ENCODE measurements at regions of chr11 and their contacts with region 1.

Region 1: GRCh38 chr11:34916015-34916842 is at the starts of genes APIP and PDHX:
- DNase-seq: peak; percentile 93
- ATAC-seq: peak; percentile 96
- H3K4me3 Mint-ChIP-seq: peak within 1 kb of the TSS; percentile 95
- H3K27ac Mint-ChIP-seq: peak within 1 kb of the TSS; percentile 91
- H3K4me1 Mint-ChIP-seq: peaks cover 27% of the 10 kb centered on the region
- H3K27me3 Mint-ChIP-seq: no peaks in the 10 kb centered on the region
- CTCF ChIP-seq: no peak
- total RNA-seq, gene APIP: 17.8 and 18.7 TPM in 2 replicates
- total RNA-seq, gene PDHX: 18.1 and 18.6 TPM in 2 replicates

Region 2: DNA sequence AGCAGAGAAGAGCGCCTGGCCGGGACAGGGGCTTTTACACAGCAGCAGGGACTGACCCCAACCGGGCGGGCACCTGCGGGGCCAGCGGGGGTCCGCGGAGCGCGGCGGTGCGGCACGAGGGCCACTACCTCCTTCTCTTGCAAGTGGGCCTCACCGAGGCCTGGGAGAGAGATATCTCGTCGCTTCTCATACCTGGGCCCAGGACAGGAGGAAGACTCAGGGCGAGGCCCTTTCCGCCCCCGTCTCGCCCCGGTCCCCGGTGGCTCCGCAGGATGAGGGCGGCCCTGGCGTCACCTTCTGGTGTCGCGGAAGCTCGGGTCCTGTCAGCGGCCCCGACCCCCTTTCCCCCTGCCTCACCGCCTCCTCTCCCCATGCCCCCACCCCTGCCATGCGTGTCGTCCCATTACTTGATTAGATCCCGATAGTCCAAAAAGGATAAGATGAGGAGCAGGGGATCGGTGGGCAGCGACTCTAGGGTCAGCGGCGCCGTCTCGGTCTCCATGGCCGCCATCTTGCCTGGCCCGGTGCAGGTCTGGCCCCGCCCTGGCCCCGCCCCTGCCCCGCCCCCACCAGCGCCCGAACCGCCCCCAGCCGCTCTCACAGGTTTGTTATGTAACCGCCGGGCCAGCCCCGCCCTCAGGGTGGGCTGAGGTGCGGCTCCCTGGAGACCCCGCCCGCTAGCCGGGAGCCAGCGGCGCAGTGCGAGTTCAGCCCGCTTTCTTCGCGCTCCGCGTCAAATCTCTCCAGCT is 1142.1 kb before region 1 on chr11 and contains the start of gene FBXO3:
- CTCF ChIA-PET with region 1: no interaction called
- POLR2A ChIA-PET with region 1: no interaction called
- intact Hi-C with region 1: loop called (anchors 1 kb)
- DNase-seq: peak; percentile 80
- ATAC-seq: peak; percentile 92
- H3K4me3 Mint-ChIP-seq: peak within 1 kb of the TSS; percentile 96
- H3K27ac Mint-ChIP-seq: peak within 1 kb of the TSS; percentile 94
- H3K4me1 Mint-ChIP-seq: peaks cover 38% of the 10 kb centered on the region
- H3K27me3 Mint-ChIP-seq: peaks cover 15% of the 10 kb centered on the region
- CTCF ChIP-seq: no peak
- total RNA-seq, gene FBXO3: 22.3 and 23.5 TPM in 2 replicates

Region 3: DNA sequence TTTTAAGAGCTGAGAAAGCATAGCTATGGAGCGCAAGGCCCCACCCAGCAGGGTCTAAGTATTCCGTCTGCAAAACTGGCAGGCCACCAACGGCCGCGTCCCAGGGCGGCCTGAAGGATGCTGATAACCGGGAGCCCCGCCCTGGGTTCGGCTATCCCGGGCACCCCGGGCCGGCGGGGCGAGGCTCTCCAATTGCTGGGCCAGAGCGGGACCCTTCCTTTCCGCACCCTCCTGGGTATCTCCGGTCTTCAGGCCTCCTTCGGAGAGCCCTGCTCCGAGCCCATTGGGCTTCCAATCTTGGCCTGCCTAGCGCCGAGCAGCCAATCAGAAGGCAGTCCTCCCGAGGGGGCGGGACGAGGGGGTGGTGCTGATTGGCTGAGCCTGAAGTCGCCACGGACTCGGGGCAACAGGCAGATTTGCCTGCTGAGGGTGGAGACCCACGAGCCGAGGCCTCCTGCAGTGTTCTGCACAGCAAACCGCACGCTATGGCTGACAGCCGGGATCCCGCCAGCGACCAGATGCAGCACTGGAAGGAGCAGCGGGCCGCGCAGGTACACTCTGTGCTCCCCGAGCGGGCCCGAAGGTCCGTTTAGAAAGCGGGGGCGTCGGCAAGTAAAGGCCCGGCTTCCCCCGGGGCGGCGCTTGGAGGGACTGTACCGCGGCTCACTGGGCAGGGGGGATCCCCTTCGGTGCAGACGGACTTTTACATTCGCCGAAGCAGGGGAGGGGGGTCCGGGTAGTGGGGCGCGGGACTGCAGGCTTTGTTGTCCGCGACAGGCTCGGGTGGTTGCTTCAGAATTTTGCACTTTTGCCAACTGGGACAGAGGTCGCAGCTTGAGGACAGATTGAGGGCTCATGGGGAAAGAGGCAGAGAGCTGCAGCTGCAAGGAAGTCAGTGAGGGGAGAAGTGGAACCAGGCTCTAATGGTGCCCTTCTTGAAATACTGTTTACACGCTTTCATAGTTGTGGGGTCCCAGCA is 477.4 kb before region 1 on chr11 and contains the start of gene CAT:
- CTCF ChIA-PET with region 1: no interaction called
- POLR2A ChIA-PET with region 1: no interaction called
- intact Hi-C with region 1: loop called (anchors 1 kb)
- DNase-seq: peak; percentile 96
- ATAC-seq: peak; percentile 90
- H3K4me3 Mint-ChIP-seq: peak within 1 kb of the TSS; percentile 99
- H3K27ac Mint-ChIP-seq: peak within 1 kb of the TSS; percentile 98
- H3K4me1 Mint-ChIP-seq: peaks cover 43% of the 10 kb centered on the region
- H3K27me3 Mint-ChIP-seq: no peaks in the 10 kb centered on the region
- CTCF ChIP-seq: no peak
- total RNA-seq, gene CAT: 79.8 and 81.2 TPM in 2 replicates

Region 4: GRCh38 chr11:35144136-35144741 is 228.0 kb after region 1 on chr11:
- CTCF ChIA-PET with region 1: no interaction called
- POLR2A ChIA-PET with region 1: no interaction called
- intact Hi-C with region 1: loop called (anchors 1 kb)
- DNase-seq: peak; percentile 63
- ATAC-seq: peak; percentile 62
- H3K4me3 Mint-ChIP-seq: peak overlapping the region; percentile 97
- H3K27ac Mint-ChIP-seq: peak overlapping the region; percentile 90
- H3K4me1 Mint-ChIP-seq: peaks cover 81% of the 10 kb centered on the region
- H3K27me3 Mint-ChIP-seq: no peaks in the 10 kb centered on the region
- CTCF ChIP-seq: no peak

Region 5: DNA sequence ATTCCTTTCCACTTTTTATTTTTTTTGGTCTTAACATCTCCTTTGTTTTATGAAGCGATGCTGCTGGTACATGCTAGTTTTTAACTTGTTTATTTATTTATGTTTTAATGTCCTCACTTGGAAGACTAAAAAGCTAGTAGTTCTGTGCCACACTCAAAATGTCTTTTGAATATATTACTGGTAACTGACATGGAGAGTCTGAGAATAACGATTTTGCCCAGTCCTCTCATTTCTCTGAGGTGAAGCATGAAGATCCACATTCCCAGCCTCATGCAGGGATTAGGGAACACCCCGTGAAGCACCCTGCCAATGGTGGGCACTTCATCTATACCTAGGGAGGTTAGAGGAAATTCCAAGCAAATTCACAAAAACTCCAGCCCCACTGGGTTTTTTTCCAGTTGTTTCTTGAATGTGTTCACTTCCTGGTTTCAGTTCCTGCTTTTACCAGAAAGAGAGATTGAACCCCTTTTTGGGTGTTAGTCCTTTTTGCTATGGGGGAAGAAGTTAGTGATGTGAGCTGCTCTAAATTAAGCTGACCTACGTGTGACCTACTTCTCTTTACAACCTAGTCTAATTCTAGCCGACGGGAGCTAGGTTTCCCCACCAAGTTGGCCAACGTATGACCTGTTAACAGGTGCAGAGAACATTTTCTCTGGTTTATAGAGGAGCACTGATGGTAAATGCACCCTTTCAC is 397.0 kb after region 1 on chr11:
- CTCF ChIA-PET with region 1: no interaction called
- POLR2A ChIA-PET with region 1: no interaction called
- intact Hi-C with region 1: loop called (anchors 5 kb)
- DNase-seq: no peak
- ATAC-seq: peak; percentile 91
- H3K4me3 Mint-ChIP-seq: peak overlapping the region; percentile 38
- H3K27ac Mint-ChIP-seq: peak overlapping the region; percentile 72
- H3K4me1 Mint-ChIP-seq: peaks cover 64% of the 10 kb centered on the region
- H3K27me3 Mint-ChIP-seq: no peaks in the 10 kb centered on the region
- CTCF ChIP-seq: no peak

Region 6: DNA sequence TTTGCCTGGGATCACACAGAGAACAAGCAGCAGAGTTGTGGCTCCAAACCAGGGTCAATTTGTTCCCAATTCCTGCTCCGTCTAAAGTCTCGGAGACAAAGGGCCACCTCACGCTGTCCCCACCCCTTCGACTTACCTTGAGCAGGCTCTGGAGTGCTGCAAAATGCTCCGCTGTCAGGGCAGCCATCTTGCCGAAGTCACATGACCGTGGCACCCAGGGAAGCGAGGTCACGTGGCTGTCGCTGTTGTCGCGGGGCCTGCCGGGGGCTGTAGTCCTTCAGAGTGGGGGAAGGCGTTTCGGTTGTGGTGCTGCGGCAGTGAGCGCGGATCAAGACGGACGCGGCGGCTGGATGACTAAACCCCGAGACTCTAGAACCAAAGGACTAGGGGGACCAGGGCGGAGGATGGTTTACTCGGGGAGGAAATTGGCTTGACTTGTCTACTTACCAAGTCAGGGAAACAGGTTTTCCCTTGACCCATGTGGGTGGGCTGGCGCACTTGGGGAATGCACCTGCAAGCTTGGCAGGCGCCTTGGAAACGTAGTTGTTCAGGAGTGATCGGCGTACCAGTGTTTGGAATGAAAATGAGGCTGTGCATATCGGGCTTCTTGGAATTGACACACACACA is 1373.1 kb after region 1 on chr11 and contains the start of gene COMMD9:
- CTCF ChIA-PET with region 1: no interaction called
- POLR2A ChIA-PET with region 1: no interaction called
- intact Hi-C with region 1: loop called (anchors 1 kb)
- DNase-seq: peak; percentile 85
- ATAC-seq: peak; percentile 96
- H3K4me3 Mint-ChIP-seq: peak within 1 kb of the TSS; percentile 95
- H3K27ac Mint-ChIP-seq: peak within 1 kb of the TSS; percentile 89
- H3K4me1 Mint-ChIP-seq: peaks cover 35% of the 10 kb centered on the region
- H3K27me3 Mint-ChIP-seq: no peaks in the 10 kb centered on the region
- CTCF ChIP-seq: no peak
- total RNA-seq, gene COMMD9: 54.4 and 61.0 TPM in 2 replicates